Transverse colon (tissue), 4 donors: ENCODE measurements at regions of chr7 and their contacts with region 1.

Region 1: GRCh38 chr7:13508586-13508985 is 480.9 kb downstream of the ETV1 start:
- DNase-seq: no peak
- H3K4me3 ChIP-seq: no peak overlapping the region
- H3K27ac ChIP-seq: no peak overlapping the region
- H3K4me1 ChIP-seq: no peaks in the 10 kb centered on the region
- H3K27me3 ChIP-seq: no peaks in the 10 kb centered on the region
- CTCF ChIP-seq: no peak
- EP300 ChIP-seq: no peak
- POLR2A ChIP-seq: no peak

Region 2: GRCh38 chr7:12747687-12748306 is 760.8 kb before region 1 on chr7:
- in situ Hi-C with region 1: no loop called
- intact Hi-C with region 1: loop called (anchors 5 kb)
- DNase-seq: no peak
- H3K4me3 ChIP-seq: no peak overlapping the region
- H3K27ac ChIP-seq: no peak overlapping the region
- H3K4me1 ChIP-seq: no peaks in the 10 kb centered on the region
- H3K27me3 ChIP-seq: no peaks in the 10 kb centered on the region
- CTCF ChIP-seq: no peak
- EP300 ChIP-seq: no peak
- POLR2A ChIP-seq: no peak